Activated CD4-positive, alpha-beta T cell treated with anti-CD3 and anti-CD28 coated beads, Interleukin-2, amount 10 ng/mL, durations not matched to agents 24 days and 14 days (primary cell): ENCODE measurements at regions of chr5 and their contacts with region 1.

Region 1: DNA sequence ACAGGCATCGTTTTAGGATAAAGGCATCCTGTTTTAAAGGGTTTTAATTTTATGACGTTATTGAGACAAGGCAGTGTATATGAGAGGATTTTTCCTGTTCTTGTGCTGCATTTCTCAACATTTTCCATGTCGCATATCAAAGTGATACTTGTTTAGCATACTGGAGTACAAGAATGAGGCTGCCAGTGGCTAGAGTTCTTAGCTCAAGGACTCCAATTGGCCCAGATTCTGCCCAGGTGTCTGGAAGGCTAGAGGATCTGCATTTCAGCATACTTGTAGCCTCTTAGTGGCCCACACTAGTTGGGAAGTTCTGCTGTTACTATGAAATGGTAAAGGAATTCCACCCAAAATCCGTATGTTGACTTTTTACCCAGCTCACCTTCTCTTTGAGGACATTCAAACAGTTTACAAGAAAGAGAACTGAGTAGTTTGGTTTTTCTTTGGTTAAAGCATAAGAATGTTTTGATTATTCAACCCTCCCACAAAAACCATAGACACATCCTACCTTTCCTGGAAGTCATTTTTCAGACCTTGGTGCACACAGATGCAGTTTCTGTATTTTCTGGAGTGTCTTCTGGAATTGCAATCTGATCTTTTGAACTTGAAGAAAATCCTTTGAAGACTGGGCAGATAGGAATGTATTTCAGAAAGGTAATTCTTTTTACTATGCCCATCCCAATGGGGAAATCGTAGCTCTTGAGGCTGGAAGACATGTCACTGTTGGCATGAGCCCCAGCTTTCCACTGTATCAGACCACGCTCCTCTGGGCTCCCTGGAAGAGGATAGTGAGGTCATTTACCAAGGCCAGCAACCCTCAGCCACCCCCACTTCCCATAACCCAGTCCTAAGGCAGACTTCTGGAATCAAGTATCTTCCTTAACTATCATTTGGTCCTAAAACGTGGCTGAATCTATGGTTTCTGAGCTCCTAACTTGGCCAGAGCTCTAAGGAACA is 11.3 kb downstream of the SLC23A1 start:
- DNase-seq: no peak
- H3K4me3 Mint-ChIP-seq: peak overlapping the region; percentile 50
- H3K27ac Mint-ChIP-seq: peak overlapping the region; percentile 70
- H3K4me1 Mint-ChIP-seq: peaks cover 21% of the 10 kb centered on the region
- H3K27me3 Mint-ChIP-seq: no peaks in the 10 kb centered on the region

Region 2: GRCh38 chr5:139385061-139386049 is 13.6 kb after region 1 on chr5:
- intact Hi-C with region 1: loop called (anchors 2 kb)
- DNase-seq: peak; percentile 82
- H3K4me3 Mint-ChIP-seq: peak overlapping the region; percentile 84
- H3K27ac Mint-ChIP-seq: peak overlapping the region; percentile 92
- H3K4me1 Mint-ChIP-seq: peaks cover 52% of the 10 kb centered on the region
- H3K27me3 Mint-ChIP-seq: no peaks in the 10 kb centered on the region

Region 3: DNA sequence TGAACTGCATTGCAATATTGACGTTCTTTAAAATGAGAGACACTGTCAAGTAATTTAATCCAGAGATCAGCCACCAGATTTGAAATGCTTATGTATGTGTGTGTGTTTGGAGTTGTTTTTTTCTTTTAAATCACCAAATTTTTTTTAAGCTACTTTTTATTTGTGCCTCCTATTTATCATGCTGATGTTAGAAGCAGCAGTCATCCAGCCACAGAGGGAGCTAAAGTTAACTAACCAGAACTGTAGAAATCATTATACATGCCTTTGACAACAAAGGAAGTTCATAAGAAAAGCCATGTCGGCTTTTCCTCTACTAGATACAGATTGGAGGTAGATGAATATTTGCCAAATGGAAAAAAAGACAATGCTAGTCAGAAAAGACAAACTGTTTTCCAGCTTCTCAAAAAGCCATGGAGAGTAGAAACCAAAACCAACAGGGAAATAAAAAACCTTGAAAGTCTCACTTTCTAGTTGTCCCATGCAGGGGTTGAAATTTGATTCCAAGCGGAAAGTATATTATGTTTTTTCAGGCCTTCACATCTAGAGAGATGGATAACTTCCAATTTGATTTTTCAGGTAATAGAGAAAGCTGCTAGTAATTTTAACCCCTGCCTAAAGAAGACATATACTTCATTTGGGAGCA is 746.7 kb after region 1 on chr5:
- intact Hi-C with region 1: no loop called
- DNase-seq: peak; percentile 42
- H3K4me3 Mint-ChIP-seq: peak overlapping the region; percentile 28
- H3K27ac Mint-ChIP-seq: no peak overlapping the region
- H3K4me1 Mint-ChIP-seq: peaks cover 36% of the 10 kb centered on the region
- H3K27me3 Mint-ChIP-seq: peaks cover 5% of the 10 kb centered on the region